Caco-2 (cell line): ENCODE measurements at regions of chr2 and their contacts with region 1.

Region 1: DNA sequence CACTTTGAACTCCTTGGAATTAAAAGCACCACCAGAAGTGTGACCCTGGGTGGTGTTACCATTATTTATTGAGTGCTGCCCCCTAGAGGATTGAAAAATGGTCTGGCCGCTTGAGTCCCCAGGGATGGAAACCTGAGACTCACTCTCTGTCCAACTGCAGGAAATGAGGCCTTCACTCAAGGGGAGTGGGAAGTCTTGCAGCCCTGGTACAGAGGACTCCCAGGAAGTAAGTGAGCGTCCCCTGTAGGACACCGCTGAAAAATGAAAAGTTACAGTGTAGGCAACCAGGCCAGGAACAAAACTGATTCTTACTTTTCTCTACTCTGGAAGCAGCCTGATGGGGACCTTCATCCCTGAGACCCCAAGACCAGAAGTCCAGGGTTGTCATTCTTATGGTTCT is 2.2 kb upstream of the NRP2 start:
- DNase-seq: peak; percentile 80
- H3K4me3 ChIP-seq: no peak overlapping the region
- H3K4me3 Mint-ChIP-seq: no peak overlapping the region
- H3K27ac Mint-ChIP-seq: peak overlapping the region; percentile 24
- H3K4me1 ChIP-seq: peaks cover 62% of the 10 kb centered on the region
- H3K4me1 Mint-ChIP-seq: peaks cover 45% of the 10 kb centered on the region
- H3K27me3 ChIP-seq: no peaks in the 10 kb centered on the region
- H3K27me3 Mint-ChIP-seq: no peaks in the 10 kb centered on the region
- CTCF ChIP-seq: peak; percentile 57 to 61

Region 2: GRCh38 chr2:204871231-204871953 is 808.7 kb before region 1 on chr2:
- CTCF ChIA-PET with region 1: interaction called, 3 read pairs
- POLR2A ChIA-PET with region 1: no interaction called
- intact Hi-C with region 1: loop called (anchors 1 kb)
- DNase-seq: peak in 1 of 2 experiments; percentile 16
- H3K4me3 ChIP-seq: no peak overlapping the region
- H3K4me3 Mint-ChIP-seq: no peak overlapping the region
- H3K27ac Mint-ChIP-seq: no peak overlapping the region
- H3K4me1 ChIP-seq: no peaks in the 10 kb centered on the region
- H3K4me1 Mint-ChIP-seq: peaks cover 20% of the 10 kb centered on the region
- H3K27me3 ChIP-seq: no peaks in the 10 kb centered on the region
- H3K27me3 Mint-ChIP-seq: no peaks in the 10 kb centered on the region
- CTCF ChIP-seq: peak; percentile 32 to 44

Region 3: GRCh38 chr2:205170399-205170798 is 509.7 kb before region 1 on chr2:
- CTCF ChIA-PET with region 1: no interaction called
- POLR2A ChIA-PET with region 1: no interaction called
- intact Hi-C with region 1: loop called (anchors 5 kb)
- DNase-seq: no peak
- H3K4me3 ChIP-seq: no peak overlapping the region
- H3K4me3 Mint-ChIP-seq: no peak overlapping the region
- H3K27ac Mint-ChIP-seq: no peak overlapping the region
- H3K4me1 ChIP-seq: no peaks in the 10 kb centered on the region
- H3K4me1 Mint-ChIP-seq: no peaks in the 10 kb centered on the region
- H3K27me3 ChIP-seq: no peaks in the 10 kb centered on the region
- H3K27me3 Mint-ChIP-seq: no peaks in the 10 kb centered on the region
- CTCF ChIP-seq: no peak

Region 4: GRCh38 chr2:205358351-205358815 is 321.7 kb before region 1 on chr2:
- CTCF ChIA-PET with region 1: no interaction called
- POLR2A ChIA-PET with region 1: interaction called, 3 read pairs
- intact Hi-C with region 1: loop called (anchors 2 kb)
- DNase-seq: peak in 1 of 2 experiments; percentile 59
- H3K4me3 ChIP-seq: no peak overlapping the region
- H3K4me3 Mint-ChIP-seq: peak overlapping the region; percentile 41
- H3K27ac Mint-ChIP-seq: peak overlapping the region; percentile 85
- H3K4me1 ChIP-seq: peaks cover 55% of the 10 kb centered on the region
- H3K4me1 Mint-ChIP-seq: peaks cover 50% of the 10 kb centered on the region
- H3K27me3 ChIP-seq: no peaks in the 10 kb centered on the region
- H3K27me3 Mint-ChIP-seq: no peaks in the 10 kb centered on the region
- CTCF ChIP-seq: no peak

Region 5: DNA sequence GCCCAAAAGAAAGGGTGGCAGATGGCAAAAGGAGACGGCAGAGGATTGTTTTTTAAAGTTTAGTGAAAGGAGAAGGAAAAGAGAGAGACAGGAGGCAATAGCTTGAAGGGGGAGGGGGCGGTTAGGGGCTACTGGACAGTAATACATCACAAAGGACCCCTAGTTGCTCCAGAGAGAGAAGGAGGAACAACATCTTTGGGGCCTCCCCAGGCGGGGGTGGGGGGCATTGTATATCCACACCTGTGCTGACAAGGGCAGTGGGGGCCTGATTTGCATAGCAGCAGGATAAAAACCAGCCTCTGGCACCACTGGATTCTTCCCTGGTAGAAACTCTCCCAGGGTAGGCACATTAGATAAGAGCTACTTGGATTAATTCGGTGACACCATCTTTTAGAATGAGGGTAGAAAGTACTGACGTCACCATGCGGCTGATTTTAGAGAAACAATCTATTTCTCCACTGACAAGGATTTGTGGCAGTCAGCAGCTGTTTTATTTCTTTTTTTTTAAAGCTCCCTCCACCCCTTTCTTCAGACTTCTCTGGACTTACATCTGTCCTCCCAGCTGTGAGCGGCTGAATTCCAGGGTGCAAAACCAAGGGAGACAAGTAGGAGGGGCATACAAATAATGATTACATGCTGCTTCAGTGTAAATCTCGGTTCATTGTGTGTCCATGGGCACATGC is 197.5 kb before region 1 on chr2:
- CTCF ChIA-PET with region 1: no interaction called
- POLR2A ChIA-PET with region 1: no interaction called
- intact Hi-C with region 1: no loop called
- DNase-seq: no peak
- H3K4me3 ChIP-seq: no peak overlapping the region
- H3K4me3 Mint-ChIP-seq: no peak overlapping the region
- H3K27ac Mint-ChIP-seq: no peak overlapping the region
- H3K4me1 ChIP-seq: peaks cover 14% of the 10 kb centered on the region
- H3K4me1 Mint-ChIP-seq: peaks cover 9% of the 10 kb centered on the region
- H3K27me3 ChIP-seq: no peaks in the 10 kb centered on the region
- H3K27me3 Mint-ChIP-seq: no peaks in the 10 kb centered on the region
- CTCF ChIP-seq: no peak

Region 6: GRCh38 chr2:205511221-205511620 is 168.8 kb before region 1 on chr2:
- CTCF ChIA-PET with region 1: interaction called, 3 read pairs
- POLR2A ChIA-PET with region 1: interaction called, 6 read pairs
- intact Hi-C with region 1: loop called (anchors 2 kb)
- DNase-seq: no peak
- H3K4me3 ChIP-seq: no peak overlapping the region
- H3K4me3 Mint-ChIP-seq: peak overlapping the region; percentile 14
- H3K27ac Mint-ChIP-seq: peak overlapping the region; percentile 24
- H3K4me1 ChIP-seq: peaks cover 42% of the 10 kb centered on the region
- H3K4me1 Mint-ChIP-seq: peaks cover 54% of the 10 kb centered on the region
- H3K27me3 ChIP-seq: no peaks in the 10 kb centered on the region
- H3K27me3 Mint-ChIP-seq: no peaks in the 10 kb centered on the region
- CTCF ChIP-seq: no peak

Region 7: DNA sequence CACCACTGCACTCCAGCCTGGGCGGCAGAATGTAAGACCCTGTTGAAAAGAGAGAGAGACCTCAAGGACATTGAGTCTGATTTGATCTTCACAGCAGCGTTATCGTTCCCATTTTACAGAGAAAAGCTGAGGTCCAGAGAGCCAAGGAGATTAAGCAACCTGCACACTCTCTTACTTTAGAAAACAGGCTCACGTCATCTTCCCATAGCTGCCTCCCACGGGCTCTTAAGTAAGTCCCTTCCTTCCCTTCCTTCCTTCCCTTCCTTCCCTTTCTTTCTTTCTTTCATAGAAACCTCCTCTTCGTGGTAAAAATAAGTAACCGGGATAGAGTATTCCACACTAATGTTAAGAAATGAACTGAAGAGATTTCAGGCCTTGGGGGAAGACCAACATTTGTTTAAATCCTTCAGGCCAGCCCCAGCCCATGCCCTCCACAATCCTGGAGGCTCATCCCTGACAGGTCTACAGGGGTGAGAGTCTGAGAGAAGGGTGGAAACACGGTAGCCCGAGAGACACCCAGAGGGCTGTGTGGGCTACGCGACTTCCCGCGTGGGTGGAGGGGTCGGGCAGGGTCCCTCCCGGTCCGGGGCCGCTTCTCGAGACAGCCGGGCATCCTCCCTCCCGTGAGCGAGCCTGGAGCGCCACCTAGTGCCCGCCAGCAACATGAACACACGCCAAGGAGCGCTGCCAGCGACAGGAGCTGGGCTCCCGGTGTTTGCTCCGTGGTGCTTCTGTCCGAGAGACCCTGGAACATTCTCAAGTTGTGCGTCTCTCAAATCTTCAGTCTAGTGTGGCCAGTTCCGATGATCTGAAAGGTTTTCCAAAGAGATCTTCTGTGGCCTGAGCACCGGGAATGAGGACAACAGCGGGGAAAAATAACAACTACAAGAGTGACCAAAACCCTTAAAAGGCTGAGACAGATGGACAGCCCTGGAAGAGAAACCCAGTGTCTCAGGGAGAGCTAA is 245.6 kb after region 1 on chr2:
- CTCF ChIA-PET with region 1: interaction called, 4 read pairs
- POLR2A ChIA-PET with region 1: no interaction called
- intact Hi-C with region 1: loop called (anchors 5 kb)
- DNase-seq: peak; percentile 77 to 88
- H3K4me3 ChIP-seq: peak overlapping the region; percentile 22
- H3K4me3 Mint-ChIP-seq: peak overlapping the region; percentile 17
- H3K27ac Mint-ChIP-seq: no peak overlapping the region
- H3K4me1 ChIP-seq: peaks cover 21% of the 10 kb centered on the region
- H3K4me1 Mint-ChIP-seq: peaks cover 21% of the 10 kb centered on the region
- H3K27me3 ChIP-seq: no peaks in the 10 kb centered on the region
- H3K27me3 Mint-ChIP-seq: no peaks in the 10 kb centered on the region
- CTCF ChIP-seq: peak; percentile 95